Heart left ventricle (tissue), 16 donors: ENCODE measurements at regions of chr20 and their contacts with region 1.

Region 1: DNA sequence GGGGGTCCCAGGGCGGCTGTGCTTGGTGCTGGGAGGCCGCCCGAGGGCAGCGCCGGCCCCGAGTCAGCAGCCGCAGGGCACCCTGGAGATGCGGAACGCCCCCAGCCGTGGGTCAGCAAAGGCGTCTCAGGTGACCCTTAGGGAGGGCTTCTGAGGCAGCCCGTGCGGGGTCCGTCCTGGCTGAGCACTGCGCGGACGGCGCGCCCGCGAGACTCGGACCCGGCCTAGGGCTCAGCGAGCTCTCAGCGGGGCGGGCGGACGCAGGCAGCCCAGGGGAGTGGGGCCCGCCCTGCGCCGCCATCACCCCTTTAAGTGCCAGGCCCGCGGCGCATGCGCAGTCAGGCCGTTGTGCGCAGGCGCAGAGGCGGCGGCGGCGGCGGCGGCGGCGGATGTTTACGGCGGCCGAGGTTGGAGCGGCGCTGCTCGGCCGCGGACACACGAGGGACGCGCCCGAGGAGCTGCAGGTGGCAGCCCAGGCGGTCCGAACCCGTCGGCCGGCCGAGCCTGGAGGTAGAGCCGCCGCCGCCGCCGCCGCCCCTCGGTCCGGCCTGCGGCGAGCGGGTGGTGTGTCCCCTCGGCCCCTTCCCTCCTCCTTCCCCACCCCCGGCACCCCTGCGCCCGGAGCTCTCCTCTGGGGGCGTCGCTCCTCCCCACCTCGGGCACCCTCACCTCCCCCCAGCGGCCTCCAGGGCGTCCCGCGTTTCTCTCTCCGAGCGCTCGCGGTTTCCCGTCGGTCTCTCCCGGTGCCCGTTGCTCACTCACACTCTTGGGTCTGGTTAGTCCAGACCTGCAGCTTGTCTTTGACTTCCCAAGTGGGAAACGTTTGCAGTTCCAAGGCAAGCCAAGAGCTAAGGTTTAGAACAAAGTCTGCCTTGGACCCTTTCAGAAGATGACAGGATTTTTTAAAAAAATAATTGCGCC is at the start of gene PCMTD2:
- DNase-seq: peak; percentile 83 to 92 (median 86)
- ATAC-seq: peak; percentile 79 to 94 (median 90)
- H3K4me3 ChIP-seq: peak within 1 kb of the TSS; percentile 27 to 95 (median 76)
- H3K27ac ChIP-seq: peak within 1 kb of the TSS; percentile 84 to 97 (median 90)
- H3K4me1 ChIP-seq: peaks cover 6 to 52% (median 38%) of the 10 kb centered on the region in 12 donors
- H3K27me3 ChIP-seq: peaks cover 0 to 6% (median 0%) of the 10 kb centered on the region in 9 donors
- CTCF ChIP-seq: no peak
- POLR2A ChIP-seq: peak in 1 of 2 donors; percentile 84
- total RNA-seq, gene PCMTD2: 41.7 to 128 (median 66.6) TPM

Region 2: DNA sequence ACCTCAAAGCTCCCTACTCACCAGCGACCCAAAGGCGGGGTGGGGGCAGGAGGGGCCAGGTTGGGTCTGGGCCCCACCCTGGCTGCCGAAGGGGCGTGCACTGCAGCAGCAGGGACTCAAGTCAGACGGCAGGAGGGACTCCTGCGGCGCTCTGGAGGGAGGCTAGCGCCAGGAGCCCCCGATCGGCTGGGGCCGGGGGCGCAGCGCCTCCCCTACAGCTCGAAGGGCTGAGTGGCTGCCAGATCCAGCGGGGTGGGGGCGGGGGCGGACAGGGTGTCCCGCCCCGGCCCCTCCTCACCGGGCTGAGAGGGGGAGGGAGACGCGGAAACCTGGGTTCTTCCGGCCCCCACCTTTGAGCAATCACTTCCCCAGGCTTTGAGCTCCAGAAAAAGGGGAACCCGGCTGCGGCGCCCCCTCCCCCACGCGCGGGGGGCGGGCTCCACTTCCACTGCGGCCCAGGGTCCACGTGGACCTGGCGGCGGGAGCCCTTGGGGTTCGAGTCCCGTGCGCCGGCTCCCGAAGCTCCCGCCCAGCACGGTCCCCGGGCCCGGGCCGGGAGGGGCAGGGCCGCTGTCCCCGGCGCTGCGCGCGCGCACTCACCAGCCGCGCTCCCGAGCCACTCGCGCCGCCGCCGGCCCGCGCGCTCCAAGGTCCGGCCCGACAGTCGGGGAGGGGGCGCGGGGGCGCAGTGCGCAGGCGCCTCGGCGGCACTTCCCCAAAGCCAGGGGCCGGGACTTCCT is 176.2 kb before region 1 on chr20 and contains the start of gene RGS19:
- intact Hi-C with region 1: loop called in 1 of 10 experiments (anchors 5 kb)
- DNase-seq: peak; percentile 80 to 92 (median 85)
- ATAC-seq: peak; percentile 33 to 67 (median 55)
- H3K4me3 ChIP-seq: peak within 1 kb of the TSS; percentile 37 to 93 (median 82)
- H3K27ac ChIP-seq: peak within 1 kb of the TSS; percentile 65 to 95 (median 86)
- H3K4me1 ChIP-seq: peaks cover 2 to 60% (median 27%) of the 10 kb centered on the region in 12 donors
- H3K27me3 ChIP-seq: peaks cover 0 to 10% (median 7%) of the 10 kb centered on the region in 9 donors
- CTCF ChIP-seq: no peak
- POLR2A ChIP-seq: no peak
- total RNA-seq, gene RGS19: 3.2 to 25.6 (median 5.3) TPM

Region 3: GRCh38 chr20:64223526-64224067 is 32.0 kb before region 1 on chr20:
- intact Hi-C with region 1: loop called in 2 of 10 experiments (anchors 5 kb)
- DNase-seq: peak in 4 of 5 donors; percentile 58 to 74 (median 65)
- ATAC-seq: peak; percentile 63 to 77 (median 72)
- H3K4me3 ChIP-seq: no peak overlapping the region
- H3K27ac ChIP-seq: peak overlapping the region in 8 of 12 donors; percentile 40 to 73 (median 58)
- H3K4me1 ChIP-seq: peaks cover 0 to 42% (median 33%) of the 10 kb centered on the region in 12 donors
- H3K27me3 ChIP-seq: peaks cover 0 to 3% (median 0%) of the 10 kb centered on the region in 9 donors
- CTCF ChIP-seq: peak; percentile 16 to 58 (median 44)
- POLR2A ChIP-seq: no peak

Region 4: DNA sequence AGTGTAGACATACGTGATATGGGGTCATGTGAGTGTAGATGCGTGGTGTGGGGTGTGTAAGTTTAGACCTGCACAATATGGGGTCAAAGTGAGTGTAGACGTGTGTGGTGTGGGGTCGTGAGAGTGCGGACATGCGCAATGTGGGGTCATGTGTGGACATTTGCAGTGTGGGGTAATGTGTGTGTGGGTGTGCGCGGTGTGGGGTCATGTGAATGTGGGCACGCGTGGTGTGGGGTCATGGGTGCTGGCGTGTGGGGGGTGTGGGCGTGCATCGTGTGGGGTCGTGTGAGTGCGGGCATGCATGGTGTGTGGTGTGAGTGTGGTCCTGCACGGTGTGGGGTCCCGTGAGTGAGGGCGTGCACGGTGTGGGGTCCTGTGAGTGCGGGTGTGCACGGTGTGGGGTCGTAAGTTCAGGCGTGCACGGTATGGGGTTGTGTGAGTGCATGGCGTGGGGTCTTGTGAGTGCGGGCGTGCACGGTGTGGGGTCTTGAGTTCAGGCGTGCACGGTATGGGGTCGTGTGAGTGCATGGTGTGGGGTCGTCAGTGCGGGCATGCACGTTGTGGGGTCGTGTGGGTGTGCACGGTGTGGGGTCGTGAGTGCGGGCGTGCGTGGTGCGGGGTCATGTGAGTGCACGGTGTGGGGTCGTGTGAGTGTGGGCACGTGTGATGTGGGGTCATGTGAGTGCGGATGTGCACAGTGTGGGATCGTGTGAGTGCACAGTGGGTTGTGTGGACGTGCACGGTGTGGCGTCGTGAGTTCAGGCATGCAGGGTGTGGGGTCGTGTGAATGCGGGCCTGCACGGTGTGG is 14.2 kb after region 1 on chr20:
- intact Hi-C with region 1: no loop called
- DNase-seq: no peak
- ATAC-seq: peak in 1 of 4 donors; percentile 57
- H3K4me3 ChIP-seq: no peak overlapping the region
- H3K27ac ChIP-seq: no peak overlapping the region
- H3K4me1 ChIP-seq: peaks cover 0 to 41% (median 15%) of the 10 kb centered on the region in 12 donors
- H3K27me3 ChIP-seq: no peaks in the 10 kb centered on the region
- CTCF ChIP-seq: no peak
- POLR2A ChIP-seq: no peak